Endothelial cell of umbilical vein (primary cell): ENCODE measurements at regions of chr7 and their contacts with region 1.

Region 1: GRCh38 chr7:87506246-87507180 is 31.0 kb upstream of the ABCB4 start:
- DNase-seq: peak; percentile 39
- H3K4me3 ChIP-seq: no peak overlapping the region
- H3K27ac ChIP-seq: no peak overlapping the region
- H3K4me1 ChIP-seq: no peaks in the 10 kb centered on the region
- H3K27me3 ChIP-seq: peaks cover 0 to 5% of the 10 kb centered on the region in 2 experiments
- CTCF ChIP-seq: peak; percentile 9 to 29
- POLR2A ChIP-seq: no peak

Region 2: GRCh38 chr7:87517136-87517815 is 10.8 kb after region 1 on chr7:
- CTCF ChIA-PET with region 1: interaction called, 17 read pairs
- POLR2A ChIA-PET with region 1: no interaction called
- dilution Hi-C with region 1: no loop called
- intact Hi-C with region 1: no loop called
- DNase-seq: no peak
- H3K4me3 ChIP-seq: no peak overlapping the region
- H3K27ac ChIP-seq: no peak overlapping the region
- H3K4me1 ChIP-seq: no peaks in the 10 kb centered on the region
- H3K27me3 ChIP-seq: no peaks in the 10 kb centered on the region
- CTCF ChIP-seq: no peak
- POLR2A ChIP-seq: no peak

Region 3: GRCh38 chr7:87628780-87629569 is 122.5 kb after region 1 on chr7:
- CTCF ChIA-PET with region 1: interaction called, 34 read pairs
- POLR2A ChIA-PET with region 1: no interaction called
- dilution Hi-C with region 1: no loop called
- intact Hi-C with region 1: loop called (anchors 2 kb)
- DNase-seq: peak; percentile 13
- H3K4me3 ChIP-seq: peak overlapping the region; percentile 44 to 53 (median 49)
- H3K27ac ChIP-seq: no peak overlapping the region
- H3K4me1 ChIP-seq: peaks cover 4% of the 10 kb centered on the region
- H3K27me3 ChIP-seq: peaks cover 0 to 2% of the 10 kb centered on the region in 2 experiments
- CTCF ChIP-seq: no peak
- POLR2A ChIP-seq: no peak

Region 4: GRCh38 chr7:87648316-87648715 is 141.8 kb after region 1 on chr7:
- CTCF ChIA-PET with region 1: no interaction called
- POLR2A ChIA-PET with region 1: no interaction called
- dilution Hi-C with region 1: no loop called
- intact Hi-C with region 1: no loop called
- DNase-seq: peak; percentile 36
- H3K4me3 ChIP-seq: no peak overlapping the region
- H3K27ac ChIP-seq: no peak overlapping the region
- H3K4me1 ChIP-seq: peaks cover 22% of the 10 kb centered on the region
- H3K27me3 ChIP-seq: no peaks in the 10 kb centered on the region
- CTCF ChIP-seq: no peak
- POLR2A ChIP-seq: no peak

Region 5: GRCh38 chr7:87886875-87887274 is 380.4 kb after region 1 on chr7:
- CTCF ChIA-PET with region 1: interaction called, 108 read pairs
- POLR2A ChIA-PET with region 1: no interaction called
- dilution Hi-C with region 1: no loop called
- intact Hi-C with region 1: loop called (anchors 1 kb)
- DNase-seq: peak; percentile 56
- H3K4me3 ChIP-seq: no peak overlapping the region
- H3K27ac ChIP-seq: no peak overlapping the region
- H3K4me1 ChIP-seq: no peaks in the 10 kb centered on the region
- H3K27me3 ChIP-seq: no peaks in the 10 kb centered on the region
- CTCF ChIP-seq: peak; percentile 3 to 9
- POLR2A ChIP-seq: no peak

Region 6: GRCh38 chr7:88111136-88111743 is 604.7 kb after region 1 on chr7:
- CTCF ChIA-PET with region 1: interaction called, 76 read pairs
- POLR2A ChIA-PET with region 1: no interaction called
- dilution Hi-C with region 1: no loop called
- intact Hi-C with region 1: loop called (anchors 1 kb)
- DNase-seq: peak; percentile 65
- H3K4me3 ChIP-seq: no peak overlapping the region
- H3K27ac ChIP-seq: no peak overlapping the region
- H3K4me1 ChIP-seq: no peaks in the 10 kb centered on the region
- H3K27me3 ChIP-seq: no peaks in the 10 kb centered on the region
- CTCF ChIP-seq: peak; percentile 32 to 36
- POLR2A ChIP-seq: no peak

Region 7: DNA sequence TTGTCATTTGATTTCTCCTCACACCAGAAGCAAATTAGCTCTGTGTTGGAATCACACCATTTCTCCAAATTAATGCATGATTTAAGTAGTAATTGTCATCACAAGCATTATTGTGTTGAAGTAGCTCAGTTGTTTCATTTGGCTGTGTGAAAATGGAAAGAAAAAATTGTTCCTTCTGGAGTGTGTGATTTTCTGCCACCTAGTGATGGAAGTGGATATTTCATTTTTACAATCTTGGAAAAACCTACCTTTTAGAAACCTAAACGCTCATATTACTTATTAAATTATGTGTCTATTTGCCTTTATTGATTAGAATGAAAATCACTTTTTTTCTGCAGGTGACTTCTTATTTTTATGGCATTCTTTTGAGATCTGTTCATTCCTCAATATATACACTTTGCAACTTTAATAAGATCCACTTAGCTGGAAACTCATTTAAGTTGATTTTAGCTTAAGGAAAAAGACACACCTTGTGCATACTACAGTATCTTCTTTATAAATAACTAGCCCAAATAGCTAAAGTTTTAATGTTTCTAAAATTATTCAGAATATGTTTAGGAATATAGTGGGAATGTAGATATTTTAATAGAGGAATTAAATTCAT is 663.3 kb after region 1 on chr7:
- CTCF ChIA-PET with region 1: interaction called, 62 read pairs
- POLR2A ChIA-PET with region 1: no interaction called
- dilution Hi-C with region 1: no loop called
- intact Hi-C with region 1: no loop called
- DNase-seq: peak; percentile 40
- H3K4me3 ChIP-seq: no peak overlapping the region
- H3K27ac ChIP-seq: no peak overlapping the region
- H3K4me1 ChIP-seq: no peaks in the 10 kb centered on the region
- H3K27me3 ChIP-seq: no peaks in the 10 kb centered on the region
- CTCF ChIP-seq: peak; percentile 17 to 33
- POLR2A ChIP-seq: no peak